ENCODE measurements at regions of chr17 and their contacts with region 1.

Region 1: GRCh38 chr17:81309070-81309905 is 14.2 kb upstream of the SLC38A10 start:
- DNase-seq: peak; percentile 90 to 99
- ATAC-seq: peak; percentile 74 to 88
- H3K4me3 ChIP-seq: peak overlapping the region; percentile 48
- H3K27ac ChIP-seq: peak overlapping the region; percentile 82 to 91
- H3K4me1 ChIP-seq: peaks cover 35% of the 10 kb centered on the region
- CTCF ChIP-seq: peak; percentile 50
- EP300 ChIP-seq: no peak
- POLR2A ChIP-seq: peak; percentile 50
- RAD21 ChIP-seq: peak; percentile 52 to 69

Region 2: DNA sequence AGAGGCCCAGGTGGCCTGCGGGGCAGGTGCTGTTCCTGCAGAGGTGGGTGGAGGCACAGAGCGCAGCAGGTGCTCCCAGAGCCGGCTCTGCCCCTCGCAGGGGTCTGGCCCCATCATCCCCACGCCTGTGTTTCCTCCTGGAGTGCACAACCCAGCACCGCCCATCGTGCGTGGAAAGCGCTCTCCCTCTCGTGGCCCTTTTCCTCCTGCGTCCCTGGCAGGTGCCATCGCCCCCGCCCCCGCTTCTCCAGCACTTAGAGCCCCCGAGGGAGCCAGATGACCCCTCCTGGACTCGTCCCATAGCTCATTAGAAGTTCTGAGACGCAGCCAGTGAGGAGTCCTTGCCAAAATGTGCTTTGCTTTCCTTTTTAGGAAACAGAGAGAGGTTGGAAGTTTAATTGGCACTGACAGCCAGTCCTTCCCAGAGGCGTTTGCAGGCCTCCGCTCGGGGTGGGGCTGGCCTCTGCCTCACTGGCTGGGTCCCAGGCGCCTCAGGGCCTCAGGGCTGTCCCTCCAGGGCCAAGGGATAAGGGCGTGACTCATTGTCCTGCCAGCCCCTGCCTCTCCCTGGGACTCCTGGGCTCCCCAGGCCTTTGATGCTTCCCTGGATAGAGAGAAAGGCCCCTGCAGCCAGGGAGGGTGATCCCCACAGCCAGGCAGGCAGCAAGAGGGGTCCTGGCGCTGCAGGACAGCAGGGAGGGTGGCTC is 349.8 kb before region 1 on chr17:
- CTCF ChIA-PET with region 1: no interaction called
- POLR2A ChIA-PET with region 1: no interaction called
- DNase-seq: no peak
- ATAC-seq: peak in 1 of 2 experiments; percentile 6; a peak in 2 of 6 replicates
- H3K4me3 ChIP-seq: no peak overlapping the region
- H3K27ac ChIP-seq: no peak overlapping the region
- H3K4me1 ChIP-seq: no peaks in the 10 kb centered on the region
- CTCF ChIP-seq: no peak
- EP300 ChIP-seq: no peak
- POLR2A ChIP-seq: no peak
- RAD21 ChIP-seq: no peak

Region 3: GRCh38 chr17:81119223-81120148 is 189.8 kb before region 1 on chr17:
- CTCF ChIA-PET with region 1: no interaction called
- POLR2A ChIA-PET with region 1: no interaction called
- DNase-seq: peak; percentile 94 to 100
- ATAC-seq: peak; percentile 38 to 77
- H3K4me3 ChIP-seq: peak overlapping the region; percentile 56
- H3K27ac ChIP-seq: peak overlapping the region; percentile 55 to 84; a peak in 5 of 6 replicates
- H3K4me1 ChIP-seq: peaks cover 8% of the 10 kb centered on the region; the same call in 2 of the 3 replicates
- CTCF ChIP-seq: peak; percentile 48
- EP300 ChIP-seq: no peak
- POLR2A ChIP-seq: no peak
- RAD21 ChIP-seq: no peak

Region 4: DNA sequence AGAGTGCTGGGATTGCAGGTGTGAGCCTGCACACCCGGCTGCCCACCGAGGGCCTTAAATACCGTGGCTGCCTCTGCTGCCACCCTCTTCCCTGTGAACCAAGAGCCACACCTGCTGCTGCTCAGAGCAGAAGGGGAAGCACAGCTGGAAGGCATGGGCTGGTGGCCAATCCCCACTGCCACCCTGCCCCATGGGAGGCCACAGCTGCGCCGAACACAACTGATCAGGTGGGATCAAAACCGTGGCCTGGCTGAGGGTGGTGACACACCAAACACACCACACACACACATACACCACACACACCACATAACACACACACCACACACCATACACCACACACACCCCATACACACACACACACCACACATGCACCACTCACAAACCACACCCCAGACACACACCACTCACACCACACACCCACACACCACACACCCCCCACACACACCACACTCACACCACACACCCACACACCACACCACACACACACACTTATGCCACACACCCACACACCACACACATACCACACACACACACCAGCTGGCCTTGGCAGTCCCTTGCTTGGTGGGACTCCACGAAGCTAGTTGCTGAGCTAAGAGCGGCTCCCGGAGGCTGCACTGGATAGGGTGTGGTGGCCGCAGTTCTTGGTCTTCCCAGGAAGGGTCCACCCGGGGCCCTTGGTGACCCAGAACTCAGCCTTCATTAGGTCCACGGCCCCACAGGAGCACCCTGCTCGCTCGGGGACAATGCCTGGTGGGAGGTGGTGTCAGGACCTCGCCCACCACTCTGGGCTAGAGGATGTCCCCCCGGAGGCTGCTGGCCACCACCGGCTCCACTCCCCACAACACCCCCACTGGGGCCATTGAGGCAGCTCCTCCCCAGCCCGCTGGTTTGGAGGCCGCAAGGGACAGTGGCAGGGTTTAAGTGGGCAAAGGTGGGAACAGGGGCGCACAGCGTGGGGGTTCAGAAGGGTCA is 101.4 kb before region 1 on chr17:
- CTCF ChIA-PET with region 1: no interaction called
- POLR2A ChIA-PET with region 1: no interaction called
- DNase-seq: no peak
- ATAC-seq: no peak
- H3K4me3 ChIP-seq: no peak overlapping the region
- H3K27ac ChIP-seq: no peak overlapping the region
- H3K4me1 ChIP-seq: no peaks in the 10 kb centered on the region
- CTCF ChIP-seq: no peak
- EP300 ChIP-seq: no peak
- POLR2A ChIP-seq: no peak
- RAD21 ChIP-seq: no peak

Region 5: GRCh38 chr17:81328978-81329919 is 20.0 kb after region 1 on chr17:
- CTCF ChIA-PET with region 1: interaction called, 158 read pairs
- POLR2A ChIA-PET with region 1: interaction called, 15 read pairs
- DNase-seq: peak; percentile 93 to 99
- ATAC-seq: peak; percentile 80 to 90
- H3K4me3 ChIP-seq: peak overlapping the region; percentile 30
- H3K27ac ChIP-seq: peak overlapping the region; percentile 93 to 94
- H3K4me1 ChIP-seq: peaks cover 39% of the 10 kb centered on the region
- CTCF ChIP-seq: no peak
- EP300 ChIP-seq: peak; percentile 19 to 41; a peak in 1 of 5 replicates
- POLR2A ChIP-seq: peak; percentile 25
- RAD21 ChIP-seq: peak; percentile 24 to 40; a peak in 2 of 5 replicates

Region 6: DNA sequence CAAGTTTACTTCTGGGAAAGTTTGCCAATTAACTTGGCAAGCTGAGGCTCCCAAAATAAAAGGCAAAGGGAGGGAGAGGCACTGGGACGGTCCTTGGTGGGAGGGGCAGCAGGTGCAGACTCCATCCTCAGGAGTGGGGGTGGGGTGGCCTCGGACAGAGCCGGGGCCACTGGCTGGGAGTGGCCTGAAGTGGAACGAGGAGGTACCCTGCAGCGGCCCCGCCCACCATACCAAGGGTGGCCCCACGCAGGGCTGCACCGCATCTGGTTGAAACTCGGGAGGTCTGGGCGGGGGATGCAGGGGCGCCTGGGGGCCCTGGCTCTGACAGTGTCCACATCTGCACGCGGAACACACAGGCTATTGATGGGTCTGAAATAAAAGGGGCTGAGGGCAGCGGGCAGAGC is 28.2 kb after region 1 on chr17:
- CTCF ChIA-PET with region 1: interaction called, 23 read pairs
- POLR2A ChIA-PET with region 1: no interaction called
- DNase-seq: peak; percentile 47 to 76
- ATAC-seq: peak; percentile 27 to 30; a peak in 4 of 6 replicates
- H3K4me3 ChIP-seq: no peak overlapping the region
- H3K27ac ChIP-seq: peak overlapping the region; percentile 23 to 96; a peak in 5 of 6 replicates
- H3K4me1 ChIP-seq: peaks cover 76% of the 10 kb centered on the region
- CTCF ChIP-seq: no peak
- EP300 ChIP-seq: no peak
- POLR2A ChIP-seq: no peak
- RAD21 ChIP-seq: no peak

Region 7: GRCh38 chr17:81346090-81346907 is 37.0 kb after region 1 on chr17:
- CTCF ChIA-PET with region 1: interaction called, 12 read pairs
- POLR2A ChIA-PET with region 1: no interaction called
- DNase-seq: peak; percentile 97 to 99
- ATAC-seq: peak; percentile 68 to 85
- H3K4me3 ChIP-seq: peak overlapping the region; percentile 72
- H3K27ac ChIP-seq: peak overlapping the region; percentile 92 to 94
- H3K4me1 ChIP-seq: peaks cover 27% of the 10 kb centered on the region
- CTCF ChIP-seq: no peak
- EP300 ChIP-seq: no peak
- POLR2A ChIP-seq: peak; percentile 78
- RAD21 ChIP-seq: peak in 1 of 2 experiments; percentile 11; a peak in 1 of 5 replicates

Region 8: GRCh38 chr17:81371910-81372760 is 62.8 kb after region 1 on chr17:
- CTCF ChIA-PET with region 1: interaction called, 17 read pairs
- POLR2A ChIA-PET with region 1: no interaction called
- DNase-seq: peak; percentile 73 to 77
- ATAC-seq: peak; percentile 91 to 95
- H3K4me3 ChIP-seq: no peak overlapping the region
- H3K27ac ChIP-seq: peak overlapping the region; percentile 19 to 36; a peak in 2 of 6 replicates
- H3K4me1 ChIP-seq: peaks cover 5% of the 10 kb centered on the region
- CTCF ChIP-seq: peak; percentile 55
- EP300 ChIP-seq: no peak
- POLR2A ChIP-seq: no peak
- RAD21 ChIP-seq: peak; percentile 69 to 71; a peak in 4 of 5 replicates

Region 9: DNA sequence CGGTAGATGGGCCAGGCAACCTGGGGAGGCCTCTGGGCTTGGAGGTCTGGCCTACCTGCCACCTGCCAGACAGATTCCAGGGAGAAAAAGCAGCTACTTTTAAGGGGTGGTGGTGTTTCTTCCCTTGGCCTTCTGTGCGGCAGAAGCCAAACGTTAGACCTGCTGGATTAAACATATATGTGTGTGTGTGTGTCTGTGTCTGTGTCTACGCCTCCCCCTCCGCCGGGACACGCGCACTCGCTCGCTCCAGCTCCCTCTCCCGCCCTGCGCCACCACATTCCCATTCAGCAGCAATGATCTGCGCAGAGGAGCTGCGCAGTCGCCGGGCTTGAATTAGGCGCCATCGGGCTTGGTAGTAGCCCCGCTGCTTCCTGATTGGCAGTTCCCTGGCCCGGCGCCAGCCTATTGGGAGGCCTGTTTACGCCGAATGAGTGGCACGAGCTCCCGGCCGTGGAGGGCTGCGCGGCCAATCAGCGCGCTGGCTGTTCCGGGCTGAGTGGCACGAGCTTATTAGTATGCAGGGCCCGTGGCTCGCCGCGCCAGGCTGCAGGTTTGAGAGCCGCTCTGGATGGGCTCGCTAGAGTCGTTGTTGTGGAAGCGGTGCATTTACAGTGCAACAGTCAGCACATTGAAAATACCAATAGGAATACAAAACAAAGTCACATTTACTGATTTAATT is 85.8 kb after region 1 on chr17 and contains the start of gene BAHCC1:
- CTCF ChIA-PET with region 1: interaction called, 23 read pairs
- POLR2A ChIA-PET with region 1: interaction called, 8 read pairs
- DNase-seq: peak; percentile 99 to 100
- ATAC-seq: peak; percentile 65 to 85
- H3K4me3 ChIP-seq: peak within 1 kb of the TSS; percentile 76
- H3K27ac ChIP-seq: peak within 1 kb of the TSS; percentile 94 to 98
- H3K4me1 ChIP-seq: peaks cover 40% of the 10 kb centered on the region
- CTCF ChIP-seq: no peak
- EP300 ChIP-seq: no peak
- POLR2A ChIP-seq: peak; percentile 79
- RAD21 ChIP-seq: no peak
- polyA plus RNA-seq, gene BAHCC1: 2.1 and 2.6 TPM in 2 replicates

Region 10: DNA sequence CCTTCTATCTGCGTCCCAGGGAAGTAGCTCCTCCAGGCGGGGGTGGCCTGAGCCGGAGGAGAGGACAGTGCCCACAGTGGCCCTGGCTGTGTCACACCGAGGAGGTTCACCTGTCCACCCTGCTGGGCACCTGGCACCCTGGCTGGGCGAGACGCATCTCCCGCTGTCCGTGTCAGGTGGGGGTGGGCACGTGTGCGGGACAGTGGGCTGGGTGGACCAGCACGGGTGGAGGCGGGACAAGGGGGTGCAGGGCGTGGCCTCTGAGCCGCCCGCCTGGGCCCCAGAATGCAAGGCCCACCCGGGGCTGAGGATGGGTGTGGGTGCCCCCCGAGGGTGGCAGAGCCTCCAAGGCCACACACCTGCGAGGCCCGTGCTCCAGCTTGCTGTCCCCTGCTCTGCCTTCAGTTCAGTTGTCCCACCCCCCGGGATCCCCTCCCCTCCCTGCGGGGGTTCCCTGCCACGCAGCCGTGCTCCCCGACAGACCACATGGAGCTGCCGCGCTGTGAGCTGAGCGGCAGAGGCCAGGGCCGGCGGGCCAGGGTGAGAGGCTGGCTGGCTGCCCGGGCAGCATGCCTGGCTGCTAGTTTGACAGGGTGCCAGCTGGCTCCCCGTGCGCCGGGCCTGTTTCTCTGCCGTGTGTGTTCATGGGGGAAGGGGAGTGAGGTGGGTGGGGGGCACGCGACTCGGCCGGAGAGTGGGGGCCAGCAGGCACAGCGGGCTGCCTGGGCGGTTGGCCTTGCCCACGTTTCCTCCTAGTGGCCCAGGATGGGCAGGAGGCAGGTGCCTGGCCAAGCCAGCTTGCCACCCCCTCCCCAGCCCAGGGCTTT is 119.9 kb after region 1 on chr17:
- CTCF ChIA-PET with region 1: interaction called, 11 read pairs
- POLR2A ChIA-PET with region 1: no interaction called
- DNase-seq: peak; percentile 64 to 80
- ATAC-seq: peak; percentile 49 to 77
- H3K4me3 ChIP-seq: no peak overlapping the region
- H3K27ac ChIP-seq: peak overlapping the region; percentile 69 to 84
- H3K4me1 ChIP-seq: peaks cover 51% of the 10 kb centered on the region
- CTCF ChIP-seq: no peak
- EP300 ChIP-seq: peak in 1 of 2 experiments; percentile 22; a peak in 1 of 5 replicates
- POLR2A ChIP-seq: no peak
- RAD21 ChIP-seq: peak in 1 of 2 experiments; percentile 34; a peak in 1 of 5 replicates